CD4-positive, alpha-beta T cell (primary cell): ENCODE measurements at regions of chr1 and their contacts with region 1.

Region 1: DNA sequence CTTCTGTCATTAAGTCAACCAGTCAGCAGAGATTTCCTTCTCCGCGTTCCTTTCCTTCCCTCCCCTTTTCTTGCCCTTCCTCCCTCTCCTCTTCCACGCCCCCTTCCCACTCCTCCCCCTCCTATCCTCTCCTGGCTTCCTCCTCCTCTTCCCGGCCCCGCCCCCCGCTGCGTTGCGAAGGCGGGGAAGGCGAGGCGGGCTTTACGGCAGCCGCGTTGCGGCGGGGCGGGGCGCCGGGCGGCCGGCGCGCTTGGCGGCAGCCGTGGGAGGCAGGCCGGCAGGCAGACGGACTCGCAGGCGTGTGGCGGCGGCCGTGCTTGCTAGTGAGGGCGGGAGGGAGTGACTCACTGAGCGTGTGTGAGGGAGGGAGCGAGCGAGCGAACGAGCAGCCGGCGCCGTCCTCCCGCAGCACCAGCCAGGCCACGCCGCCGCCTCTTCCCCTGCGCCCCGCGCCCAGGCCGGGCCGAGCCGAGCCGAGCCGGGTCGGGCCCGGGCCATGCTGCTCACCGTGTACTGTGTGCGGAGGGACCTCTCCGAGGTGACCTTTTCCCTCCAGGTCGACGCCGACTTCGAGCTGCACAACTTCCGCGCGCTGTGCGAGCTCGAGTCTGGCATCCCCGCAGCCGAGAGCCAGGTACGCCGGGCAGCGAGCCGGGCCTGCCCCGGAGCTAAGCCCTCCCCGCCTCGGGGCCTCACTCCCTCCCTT is at the start of gene DDI2:
- DNase-seq: peak; percentile 84 to 97 (median 91)
- ATAC-seq: peak; percentile 90
- H3K4me3 ChIP-seq: peak within 1 kb of the TSS; percentile 91
- H3K4me3 Mint-ChIP-seq: peak within 1 kb of the TSS; percentile 97
- H3K27ac ChIP-seq: peak within 1 kb of the TSS; percentile 80 to 91
- H3K27ac Mint-ChIP-seq: peak within 1 kb of the TSS; percentile 89
- H3K4me1 ChIP-seq: peaks cover 45% of the 10 kb centered on the region
- H3K4me1 Mint-ChIP-seq: peaks cover 51% of the 10 kb centered on the region
- H3K27me3 ChIP-seq: no peaks in the 10 kb centered on the region
- H3K27me3 Mint-ChIP-seq: no peaks in the 10 kb centered on the region
- CTCF ChIP-seq: no peak
- total RNA-seq, gene DDI2: 24.2 to 29.9 TPM

Region 2: GRCh38 chr1:15578921-15579682 is 38.2 kb before region 1 on chr1:
- CTCF ChIA-PET with region 1: interaction called, 3 read pairs
- POLR2A ChIA-PET with region 1: interaction called, 33 read pairs
- intact Hi-C with region 1: no loop called
- DNase-seq: peak in 13 of 14 experiments; percentile 13 to 81 (median 48)
- ATAC-seq: peak; percentile 92
- H3K4me3 ChIP-seq: no peak overlapping the region
- H3K4me3 Mint-ChIP-seq: peak overlapping the region; percentile 67
- H3K27ac ChIP-seq: peak overlapping the region; percentile 64
- H3K27ac Mint-ChIP-seq: peak overlapping the region; percentile 97
- H3K4me1 ChIP-seq: peaks cover 58% of the 10 kb centered on the region
- H3K4me1 Mint-ChIP-seq: peaks cover 55% of the 10 kb centered on the region
- H3K27me3 ChIP-seq: no peaks in the 10 kb centered on the region
- H3K27me3 Mint-ChIP-seq: no peaks in the 10 kb centered on the region
- CTCF ChIP-seq: no peak

Region 3: GRCh38 chr1:15592285-15592684 is 25.0 kb before region 1 on chr1:
- CTCF ChIA-PET with region 1: interaction called, 3 read pairs
- POLR2A ChIA-PET with region 1: no interaction called
- intact Hi-C with region 1: loop called in 1 of 2 experiments (anchors 2 kb)
- DNase-seq: no peak
- ATAC-seq: no peak
- H3K4me3 ChIP-seq: no peak overlapping the region
- H3K4me3 Mint-ChIP-seq: no peak overlapping the region
- H3K27ac ChIP-seq: no peak overlapping the region
- H3K27ac Mint-ChIP-seq: no peak overlapping the region
- H3K4me1 ChIP-seq: no peaks in the 10 kb centered on the region
- H3K4me1 Mint-ChIP-seq: peaks cover 2% of the 10 kb centered on the region
- H3K27me3 ChIP-seq: no peaks in the 10 kb centered on the region
- H3K27me3 Mint-ChIP-seq: no peaks in the 10 kb centered on the region
- CTCF ChIP-seq: no peak

Region 4: DNA sequence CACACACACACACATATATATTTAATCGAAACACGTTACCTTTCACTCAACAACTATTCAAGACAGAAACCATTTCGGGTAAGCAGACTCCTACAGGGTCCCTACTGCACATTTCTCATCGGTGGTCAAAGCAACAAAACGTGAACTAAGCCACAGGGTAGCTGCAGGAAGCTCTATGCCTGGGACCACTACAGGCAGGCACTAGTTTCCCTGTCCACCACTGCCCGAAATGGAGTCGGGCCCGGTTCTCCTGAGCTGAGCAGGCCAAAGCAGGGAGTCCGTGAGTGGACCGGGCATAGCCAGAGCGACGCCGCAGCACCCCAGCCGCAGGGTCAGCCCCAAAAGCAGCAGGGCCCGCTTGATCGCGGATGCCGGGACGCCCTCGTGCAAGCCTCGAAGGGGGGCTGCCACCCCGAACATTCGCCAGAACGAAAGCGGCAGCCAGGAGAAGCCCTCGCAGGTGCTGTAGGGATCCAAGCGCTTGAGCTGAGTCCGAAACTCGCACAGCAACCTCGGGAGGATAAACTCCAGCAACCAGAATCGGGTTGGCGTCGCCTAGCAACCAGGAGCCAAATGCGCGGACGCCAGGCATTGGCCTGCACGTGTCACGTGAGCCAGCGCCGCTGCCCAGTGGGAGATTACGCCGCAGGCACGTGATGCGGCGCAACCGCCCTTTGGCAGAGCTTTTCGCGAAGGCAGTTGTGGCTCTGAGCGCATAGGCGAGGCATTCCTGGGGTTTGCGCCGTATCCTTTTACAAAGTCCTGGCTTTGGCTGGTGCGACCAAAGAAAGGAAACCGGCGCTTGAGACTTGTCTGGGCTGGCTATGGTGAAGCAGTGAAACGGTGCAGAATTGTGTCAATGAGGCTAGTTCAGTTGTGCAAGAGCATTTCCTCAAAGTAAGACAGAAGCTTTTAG is 14.0 kb before region 1 on chr1:
- CTCF ChIA-PET with region 1: interaction called, 5 read pairs
- POLR2A ChIA-PET with region 1: interaction called, 5 read pairs
- intact Hi-C with region 1: loop called (anchors 1 to 2 kb)
- DNase-seq: peak; percentile 85 to 98 (median 90)
- ATAC-seq: peak; percentile 98
- H3K4me3 ChIP-seq: peak overlapping the region; percentile 95
- H3K4me3 Mint-ChIP-seq: peak overlapping the region; percentile 65
- H3K27ac ChIP-seq: peak overlapping the region; percentile 47 to 49
- H3K27ac Mint-ChIP-seq: peak overlapping the region; percentile 80
- H3K4me1 ChIP-seq: peaks cover 15% of the 10 kb centered on the region
- H3K4me1 Mint-ChIP-seq: peaks cover 13% of the 10 kb centered on the region
- H3K27me3 ChIP-seq: no peaks in the 10 kb centered on the region
- H3K27me3 Mint-ChIP-seq: no peaks in the 10 kb centered on the region
- CTCF ChIP-seq: no peak

Region 5: DNA sequence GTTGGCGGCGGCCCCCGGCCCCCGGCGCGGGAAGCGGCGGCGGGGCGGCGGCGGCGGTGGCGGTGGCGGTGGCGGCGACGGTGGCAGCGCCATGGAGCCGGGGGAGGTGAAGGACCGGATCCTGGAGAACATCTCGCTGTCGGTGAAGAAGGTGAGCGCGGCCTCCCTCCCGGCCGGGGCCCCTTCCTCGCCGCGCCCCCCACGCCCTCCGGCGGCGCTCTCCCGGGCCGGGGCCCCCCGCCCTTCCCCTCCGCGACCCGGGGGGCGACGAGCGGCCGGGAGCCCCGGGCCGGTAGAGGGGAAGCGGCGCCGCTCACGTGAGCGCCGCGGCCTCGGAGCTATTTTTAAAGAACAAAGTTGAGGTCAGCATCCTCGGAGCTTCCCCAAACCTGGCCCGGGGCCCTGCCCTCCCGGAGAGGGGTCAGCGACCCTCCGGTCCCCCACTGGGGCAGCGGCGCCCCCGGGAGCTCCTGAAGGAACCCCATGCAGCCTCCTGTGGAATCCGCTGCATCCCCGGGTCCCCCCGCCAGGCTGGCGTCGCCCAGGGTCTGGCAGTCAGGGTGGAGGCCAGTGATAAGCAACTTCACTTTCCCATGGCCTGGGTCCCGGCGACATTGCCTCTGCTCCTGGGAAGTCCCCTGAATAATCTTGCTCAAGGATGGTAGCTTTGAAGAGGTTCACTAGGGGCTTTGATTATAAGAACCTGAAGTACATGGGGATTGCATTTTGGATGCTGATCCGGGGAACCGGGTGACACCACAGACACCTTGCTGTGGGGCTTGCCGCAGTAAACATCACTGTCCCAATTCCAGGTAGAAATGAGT is 67.4 kb after region 1 on chr1:
- CTCF ChIA-PET with region 1: interaction called, 3 read pairs
- POLR2A ChIA-PET with region 1: interaction called, 6 read pairs
- intact Hi-C with region 1: loop called in 1 of 2 experiments (anchors 5 kb)
- DNase-seq: peak in 13 of 14 experiments; percentile 3 to 69 (median 25)
- ATAC-seq: peak; percentile 41
- H3K4me3 ChIP-seq: peak overlapping the region; percentile 90
- H3K4me3 Mint-ChIP-seq: peak overlapping the region; percentile 93
- H3K27ac ChIP-seq: peak overlapping the region; percentile 56 to 75
- H3K27ac Mint-ChIP-seq: peak overlapping the region; percentile 95
- H3K4me1 ChIP-seq: peaks cover 32% of the 10 kb centered on the region
- H3K4me1 Mint-ChIP-seq: peaks cover 28% of the 10 kb centered on the region
- H3K27me3 ChIP-seq: no peaks in the 10 kb centered on the region
- H3K27me3 Mint-ChIP-seq: no peaks in the 10 kb centered on the region
- CTCF ChIP-seq: no peak

Region 6: DNA sequence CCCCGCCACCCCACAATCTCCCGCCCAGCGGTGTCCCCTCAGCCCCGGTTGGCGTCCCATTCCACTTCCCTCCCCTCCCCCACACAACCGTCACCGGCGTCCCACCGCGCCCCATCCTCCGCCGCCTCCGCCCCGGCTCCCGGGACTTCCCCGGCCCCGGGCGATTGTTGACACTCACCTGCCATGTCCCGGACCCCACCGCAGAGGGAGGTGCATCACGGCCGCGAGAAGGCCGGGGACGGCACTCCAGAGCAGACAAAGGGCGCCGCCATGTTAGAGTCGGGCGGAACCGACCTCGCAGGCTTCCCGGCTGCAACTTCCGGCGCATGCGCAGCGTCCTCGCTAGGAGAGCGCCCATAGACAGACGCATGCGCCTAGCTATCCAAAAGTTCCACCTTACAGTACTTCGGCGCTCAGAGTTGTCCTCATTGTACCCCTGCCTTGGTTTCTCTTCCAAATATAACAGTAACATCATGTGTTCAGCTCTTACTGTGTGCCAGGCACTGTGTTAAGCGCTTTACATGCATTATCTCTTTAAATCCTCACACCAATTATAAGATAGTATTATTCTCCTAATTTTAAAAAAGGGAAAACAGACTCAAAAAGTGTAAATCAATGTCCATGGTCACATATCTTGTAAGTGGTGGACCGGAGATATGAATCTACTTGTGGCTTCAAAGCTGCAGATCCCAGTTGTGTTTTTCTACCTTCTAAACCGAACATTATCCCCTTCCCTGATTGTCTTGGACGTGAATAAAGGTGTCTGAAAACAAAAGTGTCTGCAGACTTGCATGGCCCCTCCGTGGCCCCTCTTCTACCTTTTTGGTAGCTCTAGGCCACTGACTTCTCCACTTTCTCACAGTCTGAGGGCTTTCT is 358.7 kb after region 1 on chr1 and contains the start of gene ZBTB17:
- CTCF ChIA-PET with region 1: no interaction called
- POLR2A ChIA-PET with region 1: no interaction called
- intact Hi-C with region 1: loop called in 1 of 2 experiments (anchors 10 kb)
- DNase-seq: peak; percentile 91 to 99 (median 94)
- ATAC-seq: peak; percentile 92
- H3K4me3 ChIP-seq: peak within 1 kb of the TSS; percentile 91
- H3K4me3 Mint-ChIP-seq: peak within 1 kb of the TSS; percentile 99
- H3K27ac ChIP-seq: peak within 1 kb of the TSS; percentile 67 to 70
- H3K27ac Mint-ChIP-seq: peak within 1 kb of the TSS; percentile 92
- H3K4me1 ChIP-seq: peaks cover 37% of the 10 kb centered on the region
- H3K4me1 Mint-ChIP-seq: peaks cover 34% of the 10 kb centered on the region
- H3K27me3 ChIP-seq: no peaks in the 10 kb centered on the region
- H3K27me3 Mint-ChIP-seq: no peaks in the 10 kb centered on the region
- CTCF ChIP-seq: no peak
- total RNA-seq, gene ZBTB17: 70.2 to 78.1 TPM

Region 7: DNA sequence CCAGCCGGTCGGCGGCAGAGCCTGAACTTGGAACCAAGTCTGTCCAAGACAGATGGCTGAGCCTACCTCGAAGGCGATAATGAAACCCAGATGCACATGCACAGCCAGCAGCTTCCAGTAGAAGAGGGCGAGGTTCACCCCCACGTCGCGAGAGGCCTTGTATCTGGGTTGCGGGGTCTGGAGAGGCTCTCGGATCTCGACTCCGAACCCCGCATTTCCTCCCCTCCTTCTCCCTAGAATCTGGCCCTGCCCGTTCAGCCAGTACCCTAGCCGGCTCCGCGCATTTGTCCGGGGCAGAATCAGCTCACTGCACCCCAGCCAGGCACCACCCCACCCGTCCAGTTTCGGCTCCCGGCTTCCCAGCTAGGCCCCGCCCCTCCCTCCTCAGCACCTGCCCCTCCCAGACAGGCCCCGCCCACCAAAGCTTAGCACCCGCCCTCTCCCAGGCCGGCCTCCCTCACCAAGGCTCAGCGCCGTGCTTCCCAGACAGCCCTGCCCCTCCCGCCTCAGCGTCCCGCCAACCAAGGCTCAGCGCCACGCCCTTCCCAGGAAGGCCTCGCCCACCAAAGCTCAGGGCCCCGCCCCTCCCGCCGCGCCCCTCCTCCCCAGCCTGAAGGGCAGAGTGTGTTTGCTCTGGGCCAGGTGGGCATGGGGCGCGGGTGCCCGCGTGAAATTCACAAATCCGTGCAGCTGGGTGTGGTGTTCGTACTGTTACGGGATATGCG is 599.9 kb after region 1 on chr1:
- CTCF ChIA-PET with region 1: no interaction called
- POLR2A ChIA-PET with region 1: no interaction called
- intact Hi-C with region 1: loop called in 1 of 2 experiments (anchors 10 kb)
- DNase-seq: peak; percentile 84 to 98 (median 93)
- ATAC-seq: peak; percentile 97
- H3K4me3 ChIP-seq: peak overlapping the region; percentile 74
- H3K4me3 Mint-ChIP-seq: peak overlapping the region; percentile 89
- H3K27ac ChIP-seq: no peak overlapping the region
- H3K27ac Mint-ChIP-seq: peak overlapping the region; percentile 50
- H3K4me1 ChIP-seq: peaks cover 28% of the 10 kb centered on the region
- H3K4me1 Mint-ChIP-seq: peaks cover 29% of the 10 kb centered on the region
- H3K27me3 ChIP-seq: peaks cover 0 to 2% of the 10 kb centered on the region in 2 experiments
- H3K27me3 Mint-ChIP-seq: no peaks in the 10 kb centered on the region
- CTCF ChIP-seq: no peak